ENCODE measurements at regions of chr15 and their contacts with region 1.

Region 1: GRCh38 chr15:32942401-32942841 is 224.6 kb downstream of the GREM1 start:
- DNase-seq: no peak
- ATAC-seq: no peak
- H3K4me3 ChIP-seq: no peak overlapping the region
- H3K4me1 ChIP-seq: no peaks in the 10 kb centered on the region
- CTCF ChIP-seq: no peak

Region 2: DNA sequence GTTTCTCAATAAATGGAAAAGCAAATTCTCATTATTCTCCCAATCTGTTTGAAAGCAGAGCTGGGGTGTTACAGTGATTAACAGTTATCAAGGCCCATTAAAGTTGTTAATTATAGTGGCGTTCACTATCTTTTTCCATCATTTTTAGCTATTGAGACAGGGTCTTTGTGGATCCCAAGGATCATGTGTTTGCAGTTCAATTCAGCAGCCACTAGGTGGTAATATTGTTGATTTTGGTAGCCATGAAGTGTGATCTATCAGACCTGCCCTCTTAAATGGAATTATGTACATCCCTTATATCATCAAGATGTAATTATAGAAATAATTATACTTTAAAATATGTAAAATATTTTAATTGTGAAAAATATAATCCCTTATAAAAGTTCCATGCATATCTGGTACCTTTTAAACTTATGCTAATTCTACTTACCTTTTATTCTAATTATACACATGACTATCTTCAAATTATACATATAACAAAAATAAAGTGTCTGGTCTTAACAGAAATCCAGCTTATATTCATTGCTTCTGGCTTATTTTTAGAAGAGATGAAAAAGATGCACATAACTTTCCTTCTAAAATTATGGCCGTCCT is 98.2 kb before region 1 on chr15:
- intact Hi-C with region 1: loop called in 1 of 2 experiments (anchors 10 kb)
- DNase-seq: no peak
- ATAC-seq: no peak
- H3K4me3 ChIP-seq: no peak overlapping the region
- H3K4me1 ChIP-seq: no peaks in the 10 kb centered on the region
- CTCF ChIP-seq: no peak